SK-N-SH (cell line): ENCODE measurements at regions of chr6 and their contacts with region 1.

Region 1: GRCh38 chr6:109705258-109705657 is 14.2 kb downstream of the FIG4 start:
- DNase-seq: peak; percentile 76
- H3K4me3 ChIP-seq: peak overlapping the region in 1 of 2 experiments; percentile 50; a peak in 1 of 4 replicates
- H3K27ac ChIP-seq: no peak overlapping the region
- H3K4me1 ChIP-seq: no peaks in the 10 kb centered on the region; a peak in 1 of 4 replicates
- H3K27me3 ChIP-seq: no peaks in the 10 kb centered on the region
- CTCF ChIP-seq: peak; percentile 100
- EP300 ChIP-seq: no peak
- RAD21 ChIP-seq: peak; percentile 100

Region 2: DNA sequence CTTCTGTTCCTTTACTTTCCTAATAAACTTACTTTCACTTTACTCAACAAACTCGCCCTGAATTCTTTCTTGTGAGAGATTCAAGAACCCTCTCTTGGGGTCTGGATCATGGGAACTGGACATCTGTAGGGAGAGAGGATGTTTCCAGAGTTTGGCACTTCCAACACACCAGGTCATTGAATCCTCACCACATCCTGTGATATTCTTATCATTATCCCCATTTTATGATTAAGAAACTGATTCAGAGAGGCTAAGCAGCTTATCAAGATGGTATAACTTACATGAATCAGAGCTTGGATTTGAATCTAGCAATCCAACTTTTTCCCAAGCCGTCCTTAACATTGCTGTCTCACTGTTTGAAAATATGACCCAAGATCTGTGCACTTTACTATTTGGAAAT is 280.3 kb before region 1 on chr6:
- CTCF ChIA-PET with region 1: no interaction called
- POLR2A ChIA-PET with region 1: no interaction called
- DNase-seq: no peak
- H3K4me3 ChIP-seq: no peak overlapping the region
- H3K27ac ChIP-seq: no peak overlapping the region
- H3K4me1 ChIP-seq: peaks cover 0 to 3% of the 10 kb centered on the region in 2 experiments; a peak in 1 of 4 replicates
- H3K27me3 ChIP-seq: no peaks in the 10 kb centered on the region
- CTCF ChIP-seq: no peak
- EP300 ChIP-seq: no peak
- RAD21 ChIP-seq: no peak

Region 3: GRCh38 chr6:109678240-109678639 is 27.0 kb before region 1 on chr6:
- CTCF ChIA-PET with region 1: no interaction called
- POLR2A ChIA-PET with region 1: no interaction called
- DNase-seq: no peak
- H3K4me3 ChIP-seq: no peak overlapping the region
- H3K27ac ChIP-seq: no peak overlapping the region
- H3K4me1 ChIP-seq: no peaks in the 10 kb centered on the region
- H3K27me3 ChIP-seq: no peaks in the 10 kb centered on the region
- CTCF ChIP-seq: no peak
- EP300 ChIP-seq: no peak
- RAD21 ChIP-seq: no peak

Region 4: DNA sequence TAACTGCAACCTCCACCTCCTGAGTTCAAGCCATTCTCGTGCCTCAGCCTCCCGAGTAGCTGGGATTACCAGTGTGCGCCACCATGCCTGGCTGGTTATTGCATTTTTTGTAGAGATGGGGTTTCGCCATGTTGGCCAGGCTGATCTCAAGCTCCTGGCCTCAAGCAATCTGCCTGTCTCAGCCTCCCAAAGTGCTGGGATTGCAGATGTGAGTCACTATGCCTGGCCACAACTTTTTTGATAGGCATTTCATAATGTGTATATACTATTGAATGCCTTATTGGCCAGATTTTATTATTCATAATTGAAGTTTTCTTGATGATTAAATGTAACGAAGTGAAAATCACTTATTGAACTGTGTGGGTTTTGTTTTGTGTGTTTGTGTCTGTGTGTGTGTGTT is 13.7 kb after region 1 on chr6:
- CTCF ChIA-PET with region 1: interaction called, 18 read pairs
- POLR2A ChIA-PET with region 1: no interaction called
- DNase-seq: no peak
- H3K4me3 ChIP-seq: no peak overlapping the region
- H3K27ac ChIP-seq: no peak overlapping the region
- H3K4me1 ChIP-seq: peaks cover 0 to 10% of the 10 kb centered on the region in 2 experiments; a peak in 2 of 4 replicates
- H3K27me3 ChIP-seq: no peaks in the 10 kb centered on the region
- CTCF ChIP-seq: no peak
- EP300 ChIP-seq: no peak
- RAD21 ChIP-seq: no peak

Region 5: DNA sequence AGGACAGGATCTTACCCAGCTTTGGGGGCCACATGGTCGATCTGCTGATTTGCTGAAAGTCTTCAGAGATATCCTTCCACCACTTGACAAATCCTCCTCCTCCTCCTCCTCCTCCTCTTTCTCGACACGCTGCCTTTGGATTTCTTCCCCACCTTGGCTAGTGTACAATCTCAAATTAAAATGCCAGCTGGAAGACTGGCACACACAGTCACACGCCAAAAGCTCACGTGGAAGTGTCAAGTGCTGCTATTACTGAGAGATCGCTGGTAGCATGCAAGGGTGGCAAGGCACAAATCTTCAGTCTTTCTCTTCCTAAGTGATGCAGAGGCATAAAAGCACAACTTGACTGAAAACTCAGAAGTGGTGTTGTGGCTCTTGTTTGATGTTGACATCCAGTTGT is 308.1 kb after region 1 on chr6:
- CTCF ChIA-PET with region 1: interaction called, 11 read pairs
- POLR2A ChIA-PET with region 1: no interaction called
- DNase-seq: no peak
- H3K4me3 ChIP-seq: no peak overlapping the region
- H3K27ac ChIP-seq: no peak overlapping the region
- H3K4me1 ChIP-seq: no peaks in the 10 kb centered on the region
- H3K27me3 ChIP-seq: no peaks in the 10 kb centered on the region; the same call in 1 of the 2 replicates
- CTCF ChIP-seq: no peak
- EP300 ChIP-seq: no peak
- RAD21 ChIP-seq: no peak

Region 6: GRCh38 chr6:110053395-110054240 is 348.4 kb after region 1 on chr6:
- CTCF ChIA-PET with region 1: interaction called, 27 read pairs
- POLR2A ChIA-PET with region 1: no interaction called
- DNase-seq: peak; percentile 59
- H3K4me3 ChIP-seq: no peak overlapping the region
- H3K27ac ChIP-seq: no peak overlapping the region
- H3K4me1 ChIP-seq: no peaks in the 10 kb centered on the region; a peak in 2 of 4 replicates
- H3K27me3 ChIP-seq: no peaks in the 10 kb centered on the region
- CTCF ChIP-seq: peak; percentile 80
- EP300 ChIP-seq: no peak
- RAD21 ChIP-seq: peak; percentile 85

Region 7: GRCh38 chr6:110398778-110399177 is 693.5 kb after region 1 on chr6:
- CTCF ChIA-PET with region 1: interaction called, 77 read pairs
- POLR2A ChIA-PET with region 1: no interaction called
- DNase-seq: no peak
- H3K4me3 ChIP-seq: no peak overlapping the region
- H3K27ac ChIP-seq: no peak overlapping the region
- H3K4me1 ChIP-seq: no peaks in the 10 kb centered on the region
- H3K27me3 ChIP-seq: no peaks in the 10 kb centered on the region
- CTCF ChIP-seq: no peak
- EP300 ChIP-seq: no peak
- RAD21 ChIP-seq: no peak